ENCODE measurements at regions of chr4 and their contacts with region 1.

Region 1: GRCh38 chr4:120066517-120067340 is at the start of gene MAD2L1:
- DNase-seq: peak; percentile 98
- H3K4me3 ChIP-seq: peak within 1 kb of the TSS; percentile 85
- H3K27ac ChIP-seq: peak within 1 kb of the TSS; percentile 92
- H3K4me1 ChIP-seq: peaks cover 60% of the 10 kb centered on the region
- CTCF ChIP-seq: no peak
- total RNA-seq, gene MAD2L1: 69.3 and 109 TPM in 2 replicates

Region 2: GRCh38 chr4:120056246-120056645 is 10.5 kb before region 1 on chr4:
- CTCF ChIA-PET with region 1: interaction called, 3 read pairs
- POLR2A ChIA-PET with region 1: interaction called, 12 read pairs
- intact Hi-C with region 1: no loop called
- DNase-seq: no peak
- H3K4me3 ChIP-seq: no peak overlapping the region
- H3K27ac ChIP-seq: no peak overlapping the region
- H3K4me1 ChIP-seq: peaks cover 31% of the 10 kb centered on the region
- CTCF ChIP-seq: peak; percentile 53

Region 3: GRCh38 chr4:120132935-120133334 is 66.2 kb after region 1 on chr4:
- CTCF ChIA-PET with region 1: no interaction called
- POLR2A ChIA-PET with region 1: interaction called, 6 read pairs
- intact Hi-C with region 1: loop called (anchors 1 kb)
- DNase-seq: peak; percentile 35
- H3K4me3 ChIP-seq: no peak overlapping the region
- H3K27ac ChIP-seq: peak overlapping the region; percentile 95
- H3K4me1 ChIP-seq: peaks cover 44% of the 10 kb centered on the region
- CTCF ChIP-seq: no peak

Region 4: DNA sequence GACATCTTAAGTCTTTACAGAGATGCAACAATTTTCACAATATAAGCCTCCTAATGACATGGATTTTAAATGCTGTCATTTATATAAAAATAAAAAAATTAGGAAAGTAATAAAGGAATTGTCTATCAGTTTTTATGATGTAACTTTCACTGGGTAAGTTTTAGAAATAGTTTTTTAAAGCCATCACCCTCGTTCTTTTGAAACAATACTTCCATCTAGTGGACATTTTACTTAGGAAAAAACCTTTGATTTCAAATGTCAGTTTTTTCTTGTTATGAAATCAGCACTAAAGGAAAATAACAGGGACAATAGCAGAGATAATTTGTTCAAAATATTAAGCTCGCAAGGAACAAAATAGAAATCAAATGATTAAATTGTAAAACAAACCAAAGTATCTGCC is 1029.9 kb after region 1 on chr4:
- CTCF ChIA-PET with region 1: no interaction called
- POLR2A ChIA-PET with region 1: interaction called, 3 read pairs
- intact Hi-C with region 1: loop called (anchors 5 kb)
- DNase-seq: peak; percentile 37
- H3K4me3 ChIP-seq: no peak overlapping the region
- H3K27ac ChIP-seq: no peak overlapping the region
- H3K4me1 ChIP-seq: no peaks in the 10 kb centered on the region
- CTCF ChIP-seq: peak; percentile 83